T-cell (primary cell): ENCODE measurements at regions of chr5 and their contacts with region 1.

Region 1: DNA sequence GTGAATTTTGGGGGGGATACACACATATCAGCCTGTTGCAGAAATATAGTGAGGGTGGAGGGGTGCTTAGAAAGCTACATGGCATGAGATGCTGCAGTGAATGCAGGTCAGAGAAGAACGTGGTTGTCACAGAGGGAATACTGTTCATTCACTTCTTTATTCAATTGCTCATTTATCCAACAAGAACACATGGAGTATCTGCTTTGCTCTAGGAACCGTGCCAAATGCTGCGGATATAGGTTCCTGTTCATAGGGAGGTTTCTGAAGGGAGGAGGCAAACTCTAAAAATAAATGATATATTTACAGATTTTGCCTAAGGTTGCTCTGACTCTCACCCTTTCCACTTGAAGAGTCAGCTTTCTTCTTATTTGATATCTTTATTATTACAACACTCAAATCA is 444.3 kb upstream of the CLINT1 start:
- DNase-seq: no peak
- ATAC-seq: no peak
- H3K4me3 ChIP-seq: no peak overlapping the region
- H3K4me3 Mint-ChIP-seq: no peak overlapping the region
- H3K27ac ChIP-seq: no peak overlapping the region
- H3K27ac Mint-ChIP-seq: no peak overlapping the region
- H3K4me1 ChIP-seq: no peaks in the 10 kb centered on the region
- H3K4me1 Mint-ChIP-seq: no peaks in the 10 kb centered on the region
- H3K27me3 ChIP-seq: no peaks in the 10 kb centered on the region
- H3K27me3 Mint-ChIP-seq: no peaks in the 10 kb centered on the region

Region 2: DNA sequence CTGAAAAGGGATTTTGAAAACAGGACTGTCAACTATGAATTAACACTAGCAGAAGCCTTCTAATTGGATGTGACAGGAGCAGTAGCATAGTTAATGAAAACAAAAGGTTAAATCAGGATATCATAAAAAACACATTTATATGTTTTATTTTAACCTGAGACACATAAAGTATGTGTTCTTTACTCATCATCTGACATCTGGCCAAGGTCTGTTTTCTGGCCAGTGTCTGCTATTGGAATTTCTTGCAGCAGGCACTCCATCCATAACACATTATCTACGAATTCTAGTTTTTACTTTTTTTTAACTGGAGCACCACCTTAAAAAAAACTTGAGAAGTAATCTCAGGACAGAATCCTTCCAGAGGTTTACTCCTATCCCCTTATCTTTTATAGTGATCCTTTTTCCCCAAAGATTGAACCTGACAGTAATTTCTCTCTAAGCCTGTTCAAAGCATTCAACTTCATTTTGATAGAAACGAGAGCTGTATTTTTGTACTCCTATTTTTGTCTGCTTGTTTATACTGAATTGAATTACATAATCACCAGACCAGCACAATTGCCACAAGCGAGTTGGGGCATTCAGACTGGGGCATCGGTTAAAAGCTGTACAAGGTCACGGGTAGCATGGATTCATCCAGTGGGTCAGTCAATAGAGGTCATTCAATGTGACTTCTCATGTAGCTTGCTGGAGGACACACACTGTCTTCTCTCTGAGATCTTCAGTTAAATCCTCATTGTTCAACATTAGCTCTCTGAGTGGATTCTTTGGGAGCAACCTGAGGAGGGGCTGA is 238.7 kb before region 1 on chr5:
- CTCF ChIA-PET with region 1: no interaction called
- POLR2A ChIA-PET with region 1: no interaction called
- DNase-seq: no peak
- ATAC-seq: no peak
- H3K4me3 ChIP-seq: no peak overlapping the region
- H3K4me3 Mint-ChIP-seq: no peak overlapping the region
- H3K27ac ChIP-seq: no peak overlapping the region
- H3K27ac Mint-ChIP-seq: no peak overlapping the region
- H3K4me1 ChIP-seq: no peaks in the 10 kb centered on the region
- H3K4me1 Mint-ChIP-seq: no peaks in the 10 kb centered on the region
- H3K27me3 ChIP-seq: no peaks in the 10 kb centered on the region
- H3K27me3 Mint-ChIP-seq: peaks cover 4 to 22% of the 10 kb centered on the region in 2 donors

Region 3: GRCh38 chr5:158313733-158314464 is 10.6 kb after region 1 on chr5:
- CTCF ChIA-PET with region 1: no interaction called
- POLR2A ChIA-PET with region 1: interaction called in 1 of 2 experiments, 13 read pairs
- DNase-seq: no peak
- ATAC-seq: no peak
- H3K4me3 ChIP-seq: no peak overlapping the region
- H3K4me3 Mint-ChIP-seq: no peak overlapping the region
- H3K27ac ChIP-seq: no peak overlapping the region
- H3K27ac Mint-ChIP-seq: no peak overlapping the region
- H3K4me1 ChIP-seq: no peaks in the 10 kb centered on the region
- H3K4me1 Mint-ChIP-seq: peaks cover 0 to 4% (median 0%) of the 10 kb centered on the region in 3 donors
- H3K27me3 ChIP-seq: peaks cover 0 to 3% of the 10 kb centered on the region in 2 experiments
- H3K27me3 Mint-ChIP-seq: peaks cover 4 to 5% of the 10 kb centered on the region in 2 donors